Heart right ventricle (tissue), 16 donors: ENCODE measurements at regions of chr3 and their contacts with region 1.

Region 1: GRCh38 chr3:123642182-123642956 is 57.5 kb upstream of the HACD2 start:
- DNase-seq: peak; percentile 59 to 65
- ATAC-seq: peak; percentile 65 to 84 (median 72)
- H3K4me3 ChIP-seq: no peak overlapping the region
- H3K27ac ChIP-seq: no peak overlapping the region
- H3K4me1 ChIP-seq: peaks cover 0 to 5% (median 0%) of the 10 kb centered on the region in 9 donors
- H3K27me3 ChIP-seq: no peaks in the 10 kb centered on the region
- CTCF ChIP-seq: peak; percentile 50 to 79 (median 71)

Region 2: DNA sequence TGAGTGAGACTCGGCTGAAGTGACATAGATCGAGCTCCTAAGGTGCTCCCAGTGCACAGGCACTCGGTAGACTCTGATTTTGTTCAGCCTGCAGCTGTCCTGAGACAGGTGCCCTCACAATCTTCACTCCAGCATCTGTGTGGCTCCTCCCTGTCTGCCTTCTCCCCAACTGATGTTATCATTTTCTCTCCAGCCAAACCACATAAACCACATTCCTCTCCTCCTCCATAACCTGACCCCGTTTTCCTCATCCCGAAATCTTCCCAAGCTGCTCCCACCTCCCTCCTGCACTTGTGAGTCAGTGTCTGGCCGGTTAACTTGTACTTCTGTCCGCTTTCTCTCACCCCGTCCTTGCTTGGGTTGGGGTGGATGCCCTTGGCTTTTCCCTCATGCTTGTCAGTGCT is 35.7 kb after region 1 on chr3:
- intact Hi-C with region 1: no loop called
- DNase-seq: no peak
- ATAC-seq: peak in 4 of 8 donors; percentile 16 to 33 (median 30)
- H3K4me3 ChIP-seq: no peak overlapping the region
- H3K27ac ChIP-seq: no peak overlapping the region
- H3K4me1 ChIP-seq: peaks cover 0 to 45% (median 11%) of the 10 kb centered on the region in 9 donors
- H3K27me3 ChIP-seq: no peaks in the 10 kb centered on the region
- CTCF ChIP-seq: no peak

Region 3: DNA sequence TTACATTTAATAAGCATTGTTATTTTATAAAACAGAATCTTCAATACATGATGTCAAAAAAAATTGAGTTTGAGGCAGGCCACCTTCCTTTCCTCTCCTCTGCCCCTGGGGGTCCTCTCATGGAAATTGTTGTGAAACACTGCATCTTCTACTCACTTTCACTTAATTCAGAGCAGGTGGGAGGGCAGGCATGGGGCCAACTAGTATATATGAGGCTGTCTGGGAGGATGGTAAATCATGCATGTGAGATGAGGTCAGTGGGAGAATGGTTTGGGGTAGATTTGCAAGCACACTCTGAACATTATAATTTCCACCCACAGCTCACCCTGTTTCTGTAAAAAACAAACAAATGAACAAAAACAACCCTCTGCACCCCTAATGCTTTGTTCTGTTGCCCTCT is 329.0 kb after region 1 on chr3:
- intact Hi-C with region 1: loop called in 1 of 10 experiments (anchors 10 kb)
- DNase-seq: no peak
- ATAC-seq: no peak
- H3K4me3 ChIP-seq: no peak overlapping the region
- H3K27ac ChIP-seq: no peak overlapping the region
- H3K4me1 ChIP-seq: no peaks in the 10 kb centered on the region
- H3K27me3 ChIP-seq: peaks cover 0 to 15% (median 0%) of the 10 kb centered on the region in 7 donors
- CTCF ChIP-seq: no peak